ENCODE measurements at regions of chr10 and their contacts with region 1.

Region 1: DNA sequence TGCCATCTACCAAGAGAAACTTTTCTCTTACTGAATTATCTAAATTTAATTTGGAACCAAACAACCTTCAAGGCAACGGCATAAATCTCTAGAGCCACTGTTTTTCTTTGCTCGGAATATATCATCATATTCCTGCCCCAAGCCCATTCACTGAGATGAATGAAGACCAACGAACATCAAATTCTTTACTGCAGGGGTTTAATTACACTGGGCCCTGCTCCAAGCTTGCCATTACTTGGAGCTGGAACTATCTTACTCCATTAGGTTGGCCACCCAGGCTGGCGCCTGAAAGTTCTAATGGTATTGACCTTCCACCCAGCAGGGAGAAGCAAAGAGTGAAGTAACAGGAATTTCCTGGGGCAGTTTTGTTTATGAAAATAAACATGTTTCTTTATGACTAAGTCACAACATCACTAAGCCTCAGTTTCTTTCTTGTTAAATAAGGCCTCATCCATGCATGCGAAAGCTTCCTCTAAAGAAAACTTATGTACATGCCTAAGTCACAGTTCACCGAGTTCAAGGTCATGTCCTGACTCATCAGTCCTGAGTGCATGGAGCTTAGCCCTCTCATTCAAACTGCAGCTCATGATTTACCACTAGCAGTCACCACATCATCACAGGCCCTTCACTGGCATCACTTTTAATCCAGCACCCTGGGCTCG is 42.0 kb upstream of the ANAPC16 start:
- DNase-seq: peak in 1 of 2 experiments; percentile 48
- H3K4me3 ChIP-seq: no peak overlapping the region
- H3K27ac ChIP-seq: peak overlapping the region; percentile 43
- H3K4me1 ChIP-seq: peaks cover 61% of the 10 kb centered on the region
- H3K27me3 ChIP-seq: no peaks in the 10 kb centered on the region
- CTCF ChIP-seq: no peak

Region 2: GRCh38 chr10:72097448-72098300 is 76.1 kb before region 1 on chr10:
- CTCF ChIA-PET with region 1: no interaction called
- POLR2A ChIA-PET with region 1: no interaction called
- intact Hi-C with region 1: loop called (anchors 2 kb)
- DNase-seq: peak; percentile 84 to 100
- H3K4me3 ChIP-seq: no peak overlapping the region
- H3K27ac ChIP-seq: peak overlapping the region; percentile 68
- H3K4me1 ChIP-seq: peaks cover 49% of the 10 kb centered on the region
- H3K27me3 ChIP-seq: no peaks in the 10 kb centered on the region
- CTCF ChIP-seq: no peak

Region 3: DNA sequence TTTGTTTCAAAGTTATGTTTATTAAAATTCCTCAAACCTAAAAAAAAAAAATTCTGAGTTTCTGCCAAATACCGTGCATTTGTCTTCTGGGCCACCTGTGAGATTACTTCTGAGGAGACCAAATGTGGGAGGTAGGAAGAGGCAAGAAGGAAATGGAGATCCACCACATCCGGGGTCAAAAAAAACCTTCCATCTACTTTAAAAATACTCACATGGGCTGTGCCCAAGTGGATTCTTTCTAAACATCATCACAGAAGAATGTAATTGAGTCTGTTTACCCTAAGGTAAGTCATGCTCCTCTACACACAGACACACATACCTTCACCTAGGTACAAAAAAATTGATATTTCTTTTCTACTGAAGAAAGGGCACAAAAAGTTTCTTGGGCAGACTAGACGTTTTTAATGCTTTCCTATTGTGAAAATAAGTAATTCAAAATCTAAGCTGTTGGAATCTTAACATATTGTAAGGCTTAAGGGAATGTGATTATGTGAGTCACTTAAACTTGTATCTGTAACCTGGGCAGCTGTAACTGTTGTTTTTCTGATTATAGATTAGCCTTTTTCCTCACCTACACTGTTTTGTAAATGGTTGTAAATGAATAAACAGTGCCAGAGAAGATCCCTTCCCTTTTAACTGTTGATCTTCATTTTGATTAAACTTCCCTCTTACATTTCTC is 66.3 kb before region 1 on chr10:
- CTCF ChIA-PET with region 1: no interaction called
- POLR2A ChIA-PET with region 1: no interaction called
- intact Hi-C with region 1: loop called (anchors 1 kb)
- DNase-seq: peak; percentile 68 to 98
- H3K4me3 ChIP-seq: peak overlapping the region; percentile 10; the same call in 1 of the 2 replicates
- H3K27ac ChIP-seq: peak overlapping the region; percentile 88
- H3K4me1 ChIP-seq: peaks cover 60% of the 10 kb centered on the region
- H3K27me3 ChIP-seq: no peaks in the 10 kb centered on the region
- CTCF ChIP-seq: no peak

Region 4: DNA sequence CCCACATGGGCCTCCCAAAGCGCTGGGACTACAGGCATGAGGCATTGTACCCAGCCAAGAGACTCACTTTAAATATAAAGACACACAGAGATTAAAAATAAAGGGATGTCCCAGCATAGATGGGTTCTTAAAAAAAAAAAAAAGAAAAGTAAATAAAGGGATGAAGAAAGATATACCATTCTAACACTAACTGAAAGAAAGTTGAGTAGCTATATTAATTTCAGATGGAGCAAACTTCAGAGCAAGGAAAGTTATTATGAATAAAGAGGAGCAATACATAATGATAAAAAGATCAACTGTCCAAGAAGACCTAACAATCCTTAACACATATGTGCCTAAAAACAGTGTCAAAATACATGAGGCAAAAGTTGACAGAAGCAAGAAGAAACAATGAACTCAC is 52.4 kb before region 1 on chr10:
- CTCF ChIA-PET with region 1: no interaction called
- POLR2A ChIA-PET with region 1: no interaction called
- intact Hi-C with region 1: no loop called
- DNase-seq: no peak
- H3K4me3 ChIP-seq: no peak overlapping the region
- H3K27ac ChIP-seq: no peak overlapping the region
- H3K4me1 ChIP-seq: no peaks in the 10 kb centered on the region
- H3K27me3 ChIP-seq: no peaks in the 10 kb centered on the region
- CTCF ChIP-seq: no peak

Region 5: DNA sequence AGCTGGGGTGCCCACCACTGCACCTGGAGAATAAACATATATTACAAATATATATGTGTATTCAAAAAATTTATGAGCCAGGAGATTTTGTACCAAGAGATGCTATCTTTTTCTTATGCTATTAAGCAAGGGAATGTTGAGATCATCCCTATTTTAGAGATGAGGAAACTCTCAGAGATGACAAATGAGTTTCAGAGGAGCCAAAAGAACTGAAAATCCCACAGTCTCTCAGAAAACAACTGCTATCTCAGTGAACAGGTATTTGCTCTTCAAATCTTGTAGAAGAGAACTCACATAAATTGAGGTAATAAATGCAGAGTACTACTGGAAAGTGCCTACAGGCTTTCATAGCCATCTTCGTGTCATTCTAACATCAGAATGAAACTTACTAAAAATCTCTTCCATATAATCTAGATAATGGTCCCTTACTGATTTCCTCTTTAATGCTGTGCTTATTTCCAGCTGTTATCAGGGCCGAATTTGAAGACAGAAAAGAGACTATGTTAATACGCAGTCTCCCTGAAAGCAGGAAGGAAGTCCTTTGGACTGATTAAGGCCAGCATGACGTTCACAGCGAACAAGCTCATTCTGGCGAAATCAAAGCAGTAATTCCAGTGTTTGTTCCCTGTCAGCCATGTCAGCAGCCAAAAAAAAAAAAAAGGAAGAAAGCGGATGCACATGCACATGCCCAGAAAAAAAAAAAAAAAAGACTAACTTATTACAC is 12.7 kb after region 1 on chr10:
- CTCF ChIA-PET with region 1: interaction called, 23 read pairs
- POLR2A ChIA-PET with region 1: interaction called, 15 read pairs
- intact Hi-C with region 1: no loop called
- DNase-seq: no peak
- H3K4me3 ChIP-seq: no peak overlapping the region
- H3K27ac ChIP-seq: no peak overlapping the region
- H3K4me1 ChIP-seq: no peaks in the 10 kb centered on the region
- H3K27me3 ChIP-seq: no peaks in the 10 kb centered on the region
- CTCF ChIP-seq: no peak

Region 6: DNA sequence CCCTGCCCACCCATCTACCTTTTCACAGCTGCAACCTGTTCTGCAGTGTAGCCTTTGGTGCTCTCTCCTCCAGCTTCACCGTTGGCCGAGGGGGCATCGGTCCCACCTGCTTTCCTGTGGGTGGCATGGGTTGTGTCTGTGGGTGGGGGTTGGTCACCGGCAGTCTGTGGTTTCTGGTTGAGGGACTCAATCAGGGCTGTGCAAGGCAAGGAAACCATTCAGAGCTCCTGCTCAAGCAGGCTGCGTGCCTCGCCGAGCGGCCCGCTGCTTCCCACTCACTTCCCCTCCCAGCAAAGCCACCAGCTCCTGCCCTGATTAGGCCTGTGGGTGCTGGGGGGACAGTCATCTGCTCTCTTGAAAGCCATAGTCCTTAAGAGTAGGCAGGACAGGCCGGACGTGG is 171.2 kb after region 1 on chr10:
- CTCF ChIA-PET with region 1: no interaction called
- POLR2A ChIA-PET with region 1: no interaction called
- intact Hi-C with region 1: no loop called
- DNase-seq: no peak
- H3K4me3 ChIP-seq: no peak overlapping the region
- H3K27ac ChIP-seq: no peak overlapping the region
- H3K4me1 ChIP-seq: no peaks in the 10 kb centered on the region
- H3K27me3 ChIP-seq: no peaks in the 10 kb centered on the region
- CTCF ChIP-seq: no peak

Region 7: DNA sequence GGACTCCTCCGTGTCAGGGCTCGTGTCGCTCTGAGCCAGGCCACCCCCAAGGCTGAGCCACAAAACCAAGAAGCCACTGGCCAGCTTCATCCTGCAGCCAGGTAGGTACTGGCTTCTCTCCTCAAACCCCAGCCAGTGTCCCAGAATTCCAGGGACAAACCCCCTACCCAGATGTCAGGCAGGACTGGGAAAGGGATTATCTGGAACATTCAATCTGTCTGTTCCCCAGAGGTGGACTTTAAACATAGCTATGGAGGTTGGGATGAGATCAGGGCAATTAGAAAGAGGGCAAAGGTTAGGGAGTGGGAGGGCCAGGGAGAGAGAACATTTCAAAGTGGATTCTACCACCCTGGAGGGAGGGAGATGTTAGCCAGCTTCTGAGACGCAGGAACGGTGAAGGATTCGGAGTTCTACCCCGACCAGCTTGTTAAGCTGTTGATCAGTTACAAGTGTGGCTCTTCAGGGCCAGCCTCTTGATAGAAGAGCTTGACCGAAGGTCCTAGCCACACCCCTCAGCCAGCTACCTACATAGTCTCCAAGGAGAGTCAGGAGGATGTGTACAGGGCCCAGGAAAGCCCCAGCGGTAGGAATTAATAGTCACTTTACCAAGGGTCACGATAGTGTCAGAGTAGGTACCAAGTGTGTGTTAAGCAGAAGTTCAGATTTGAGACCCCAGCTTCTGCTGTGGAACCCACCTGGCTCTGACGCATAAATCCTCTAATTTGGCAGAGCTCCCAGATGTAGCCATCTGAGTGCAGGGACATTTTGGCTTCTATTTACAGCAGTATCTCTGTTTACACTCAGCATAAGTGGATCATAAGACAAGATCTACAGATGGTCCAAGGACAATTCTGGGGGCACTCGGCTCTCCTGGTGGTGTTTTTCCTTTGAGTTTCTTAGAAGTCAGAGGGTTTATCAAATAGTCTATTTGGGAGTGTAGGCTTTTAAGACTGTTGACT is 781.1 kb after region 1 on chr10 and contains the start of gene PLA2G12B:
- CTCF ChIA-PET with region 1: no interaction called
- POLR2A ChIA-PET with region 1: no interaction called
- intact Hi-C with region 1: no loop called
- DNase-seq: no peak
- H3K4me3 ChIP-seq: no peak within 1 kb of the TSS
- H3K27ac ChIP-seq: no peak within 1 kb of the TSS
- H3K4me1 ChIP-seq: no peaks in the 10 kb centered on the region
- H3K27me3 ChIP-seq: no peaks in the 10 kb centered on the region
- CTCF ChIP-seq: no peak
- total RNA-seq, gene PLA2G12B: not detected in 2 replicates

Measured in PC-9 (cell line).